ENCODE measurements at regions of chr2 and their contacts with region 1.

Region 1: DNA sequence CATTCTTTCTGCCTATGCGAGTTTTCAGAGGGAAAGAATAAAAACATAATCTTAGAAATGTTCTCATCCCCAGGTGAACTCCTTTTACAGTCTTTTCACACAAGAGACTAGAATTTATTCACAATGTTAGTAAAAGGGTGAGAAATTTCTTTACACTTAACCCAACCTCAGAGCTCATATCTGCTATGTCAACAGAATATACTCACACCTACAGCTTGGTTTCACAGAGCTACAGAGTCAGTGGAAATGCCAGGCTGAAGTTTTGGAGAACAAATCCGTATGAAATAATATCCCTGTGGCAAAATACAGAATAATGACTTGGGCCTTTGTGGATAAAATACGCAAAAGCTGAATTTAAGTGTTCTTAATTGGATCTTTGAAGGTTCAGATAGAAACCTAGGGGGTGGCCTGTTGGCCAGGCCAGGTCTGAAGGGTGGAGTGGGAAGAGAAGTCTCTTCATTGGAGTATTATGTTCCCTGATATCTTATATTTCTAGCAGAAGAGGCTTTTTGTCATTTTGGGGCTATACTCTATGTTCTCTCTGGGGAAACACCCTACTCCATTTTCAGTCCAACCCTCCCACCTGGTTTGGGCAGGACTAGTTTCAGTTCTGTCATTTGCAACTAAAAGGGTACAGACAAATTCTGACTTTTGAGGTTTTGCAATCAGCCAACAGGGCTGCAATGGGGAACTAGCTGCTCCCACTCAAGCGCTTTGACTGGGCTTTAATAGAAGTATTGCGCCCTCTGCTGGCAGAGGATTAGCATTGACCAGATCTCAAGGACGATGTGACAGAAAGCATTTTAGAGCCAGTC is 25.7 kb downstream of the FBXO48 start:
- DNase-seq: peak; percentile 72
- H3K4me3 ChIP-seq: peak overlapping the region in 1 of 2 experiments; percentile 26; a peak in 1 of 4 replicates
- H3K27ac ChIP-seq: no peak overlapping the region
- H3K4me1 ChIP-seq: peaks cover 0 to 3% of the 10 kb centered on the region in 2 experiments; a peak in 1 of 4 replicates
- H3K27me3 ChIP-seq: no peaks in the 10 kb centered on the region
- CTCF ChIP-seq: peak; percentile 94
- EP300 ChIP-seq: no peak
- RAD21 ChIP-seq: peak; percentile 91

Region 2: GRCh38 chr2:68127358-68128242 is 313.8 kb before region 1 on chr2:
- CTCF ChIA-PET with region 1: interaction called, 49 read pairs
- POLR2A ChIA-PET with region 1: no interaction called
- DNase-seq: no peak
- H3K4me3 ChIP-seq: no peak overlapping the region
- H3K27ac ChIP-seq: no peak overlapping the region
- H3K4me1 ChIP-seq: no peaks in the 10 kb centered on the region; a peak in 1 of 4 replicates
- H3K27me3 ChIP-seq: no peaks in the 10 kb centered on the region
- CTCF ChIP-seq: no peak
- EP300 ChIP-seq: no peak
- RAD21 ChIP-seq: no peak

Region 3: DNA sequence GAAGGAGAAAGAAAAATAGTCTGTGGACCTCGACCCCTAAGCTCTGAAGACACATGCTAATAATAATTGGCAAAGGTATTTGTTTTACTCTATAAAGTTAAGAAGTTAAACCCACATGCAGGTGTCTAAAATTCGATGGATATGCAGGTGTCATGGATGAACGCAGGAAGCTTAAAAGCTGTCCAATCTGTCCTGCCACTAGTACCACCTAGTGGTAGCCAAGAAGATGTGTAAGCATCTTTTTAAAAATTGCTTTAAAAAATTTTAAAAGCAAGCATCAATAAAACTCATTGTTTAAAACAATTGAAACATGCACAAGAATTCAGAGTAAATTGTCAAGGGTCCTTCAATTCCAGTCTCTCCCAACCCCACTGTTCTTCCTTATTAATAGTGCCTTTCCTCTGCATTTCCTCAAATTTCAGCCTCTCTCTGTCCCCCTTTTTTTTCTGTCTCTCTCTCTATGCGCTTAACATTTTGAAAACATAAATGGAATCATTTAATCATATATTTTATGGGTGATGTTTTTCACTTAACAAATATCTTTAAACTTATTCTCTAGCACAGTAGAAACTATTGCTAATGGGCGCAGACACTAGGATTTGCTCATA is 158.5 kb before region 1 on chr2:
- CTCF ChIA-PET with region 1: interaction called, 15 read pairs
- POLR2A ChIA-PET with region 1: no interaction called
- DNase-seq: peak; percentile 69
- H3K4me3 ChIP-seq: no peak overlapping the region
- H3K27ac ChIP-seq: no peak overlapping the region
- H3K4me1 ChIP-seq: peaks cover 0 to 4% of the 10 kb centered on the region in 2 experiments; a peak in 2 of 4 replicates
- H3K27me3 ChIP-seq: no peaks in the 10 kb centered on the region
- CTCF ChIP-seq: peak; percentile 89
- EP300 ChIP-seq: no peak
- RAD21 ChIP-seq: peak; percentile 83

Region 4: DNA sequence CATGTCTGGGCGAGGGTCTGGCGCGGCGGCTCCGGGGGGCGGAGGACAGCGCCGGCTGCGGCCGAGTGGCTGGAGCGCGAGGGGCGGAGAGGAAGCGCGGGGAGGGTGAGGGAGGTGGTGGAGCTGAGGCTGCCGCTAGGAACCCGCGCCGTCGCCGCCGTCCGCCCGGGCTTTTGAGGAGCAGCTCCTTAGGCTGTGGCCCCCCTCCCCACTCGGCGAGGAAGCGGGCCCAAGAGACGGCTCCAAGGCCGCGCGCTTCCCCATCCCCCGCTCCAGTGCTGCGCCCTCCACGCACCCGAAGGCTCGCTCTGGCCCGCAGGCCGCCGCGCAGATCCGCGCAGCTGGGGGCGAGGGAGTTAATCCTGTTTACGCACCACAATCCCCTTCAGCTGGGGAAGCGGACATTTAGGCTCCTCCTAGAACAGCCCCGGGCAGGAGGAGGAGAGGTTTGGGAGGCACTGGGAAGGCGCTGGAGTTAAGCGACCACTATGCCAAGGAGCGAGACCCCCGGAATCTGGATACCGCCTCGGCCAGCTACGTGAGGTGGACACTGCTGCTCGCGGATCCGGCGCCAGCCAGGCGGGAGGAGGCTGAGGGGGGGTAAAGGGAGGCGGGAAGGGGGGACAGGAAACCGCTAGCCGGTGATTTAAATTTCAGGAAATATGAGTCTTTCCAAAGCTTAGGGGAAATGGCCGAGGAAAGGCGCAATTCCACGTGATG is 121.8 kb before region 1 on chr2 and contains the start of gene CNRIP1:
- CTCF ChIA-PET with region 1: interaction called, 10 read pairs
- POLR2A ChIA-PET with region 1: interaction called, 4 read pairs
- DNase-seq: peak; percentile 87
- H3K4me3 ChIP-seq: peak within 1 kb of the TSS; percentile 91 to 94
- H3K27ac ChIP-seq: peak within 1 kb of the TSS; percentile 89 to 97
- H3K4me1 ChIP-seq: peaks cover 7 to 11% of the 10 kb centered on the region in 2 experiments; a peak in 3 of 4 replicates
- H3K27me3 ChIP-seq: no peaks in the 10 kb centered on the region
- CTCF ChIP-seq: no peak
- EP300 ChIP-seq: peak in 1 of 2 experiments; percentile 57; a peak in 1 of 4 replicates
- RAD21 ChIP-seq: no peak
- polyA plus RNA-seq, gene CNRIP1: 55.5 and 63.0 TPM in 2 replicates

Region 5: DNA sequence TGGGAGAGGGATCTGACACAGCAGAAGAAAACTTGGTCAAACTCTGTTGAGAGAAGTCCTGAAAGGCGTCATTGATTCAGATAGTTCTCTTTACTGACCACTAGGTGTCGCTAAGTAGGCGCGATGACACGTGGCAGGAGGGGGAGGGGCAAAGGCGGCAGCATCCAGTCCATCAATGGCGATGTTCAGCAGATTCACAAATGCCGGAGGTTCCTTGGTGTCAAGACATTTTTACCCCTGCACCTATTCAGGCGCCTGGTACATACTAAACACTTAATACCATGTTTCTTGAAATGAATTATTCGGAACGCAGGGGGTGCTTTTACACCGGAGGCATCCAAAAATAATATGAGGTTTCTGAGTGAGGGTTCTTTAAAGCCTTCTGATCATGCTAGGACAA is 79.3 kb before region 1 on chr2:
- CTCF ChIA-PET with region 1: interaction called, 20 read pairs
- POLR2A ChIA-PET with region 1: no interaction called
- DNase-seq: peak; percentile 68
- H3K4me3 ChIP-seq: no peak overlapping the region
- H3K27ac ChIP-seq: no peak overlapping the region
- H3K4me1 ChIP-seq: no peaks in the 10 kb centered on the region; a peak in 1 of 4 replicates
- H3K27me3 ChIP-seq: no peaks in the 10 kb centered on the region
- CTCF ChIP-seq: peak; percentile 74
- EP300 ChIP-seq: no peak
- RAD21 ChIP-seq: peak; percentile 75

Region 6: DNA sequence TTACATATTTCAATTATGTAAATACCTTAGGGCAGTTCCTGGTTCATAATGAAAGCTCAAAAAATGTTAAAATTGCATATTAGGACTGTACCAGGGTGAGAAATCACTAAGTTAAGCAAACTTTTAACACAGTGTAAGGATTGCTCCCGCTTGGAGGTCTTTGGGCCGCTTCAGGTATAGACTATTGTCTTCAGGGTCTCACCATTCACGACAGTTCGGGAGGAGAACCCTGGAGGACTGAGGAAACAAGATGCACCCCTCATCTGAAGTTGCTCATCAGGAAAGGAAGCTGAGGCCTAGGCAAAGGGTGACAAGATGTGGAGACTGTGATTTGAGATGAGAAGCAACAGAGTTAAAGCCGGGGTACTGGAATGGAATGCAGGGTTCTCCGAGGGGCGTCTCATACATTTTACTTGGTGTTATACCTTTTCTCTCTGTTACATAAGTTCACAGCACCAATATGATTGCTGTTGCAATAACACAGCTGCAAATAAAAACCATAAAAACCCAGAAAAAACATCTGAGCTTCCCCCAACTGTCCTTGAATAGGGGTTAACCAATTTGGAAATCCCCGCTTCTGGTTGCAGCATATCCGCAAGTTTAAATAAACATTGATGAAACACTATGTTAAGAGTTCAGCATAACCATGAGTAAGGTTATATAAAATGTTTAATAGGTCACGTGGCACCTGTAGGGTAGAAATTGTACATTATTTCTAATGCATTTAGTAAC is 14.4 kb before region 1 on chr2:
- CTCF ChIA-PET with region 1: interaction called, 26 read pairs
- POLR2A ChIA-PET with region 1: no interaction called
- DNase-seq: no peak
- H3K4me3 ChIP-seq: no peak overlapping the region
- H3K27ac ChIP-seq: no peak overlapping the region
- H3K4me1 ChIP-seq: no peaks in the 10 kb centered on the region
- H3K27me3 ChIP-seq: no peaks in the 10 kb centered on the region
- CTCF ChIP-seq: no peak
- EP300 ChIP-seq: no peak
- RAD21 ChIP-seq: no peak

Region 7: DNA sequence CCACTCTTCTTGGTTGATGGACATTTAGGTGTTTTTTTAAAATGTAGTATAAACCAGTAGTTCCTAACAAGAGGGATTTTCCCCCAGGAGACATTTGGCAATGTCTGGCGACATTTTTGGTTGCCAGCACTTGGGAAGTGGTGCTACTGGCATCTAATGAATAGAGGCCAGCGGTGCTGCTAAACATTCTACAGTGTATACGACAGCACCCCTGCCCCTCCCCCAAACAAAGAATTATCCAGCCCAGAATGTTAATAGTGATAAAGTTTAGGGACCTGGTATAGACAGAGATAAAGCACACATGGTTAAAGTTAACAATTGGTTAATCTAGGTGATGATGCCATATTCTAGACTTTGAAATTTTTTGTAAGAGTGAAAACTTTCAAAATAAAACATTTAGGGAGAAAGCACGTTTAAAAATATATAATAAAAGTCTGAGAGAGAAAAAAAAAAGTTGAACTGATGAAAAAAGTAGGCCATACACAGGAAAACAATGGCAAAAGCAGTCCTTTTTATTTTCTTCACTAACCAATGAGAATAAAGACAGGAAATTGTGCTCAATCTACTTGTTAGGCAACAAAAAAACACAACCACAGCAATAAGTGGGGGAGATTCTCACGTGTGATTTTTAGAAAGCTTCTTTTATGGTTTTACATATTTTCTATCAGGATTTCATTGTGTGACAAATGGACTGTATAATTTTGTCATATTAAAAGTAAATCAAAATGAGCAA is 10.9 kb after region 1 on chr2:
- CTCF ChIA-PET with region 1: interaction called, 19 read pairs
- POLR2A ChIA-PET with region 1: no interaction called
- DNase-seq: no peak
- H3K4me3 ChIP-seq: no peak overlapping the region
- H3K27ac ChIP-seq: no peak overlapping the region
- H3K4me1 ChIP-seq: no peaks in the 10 kb centered on the region
- H3K27me3 ChIP-seq: no peaks in the 10 kb centered on the region
- CTCF ChIP-seq: no peak
- EP300 ChIP-seq: no peak
- RAD21 ChIP-seq: no peak

Region 8: DNA sequence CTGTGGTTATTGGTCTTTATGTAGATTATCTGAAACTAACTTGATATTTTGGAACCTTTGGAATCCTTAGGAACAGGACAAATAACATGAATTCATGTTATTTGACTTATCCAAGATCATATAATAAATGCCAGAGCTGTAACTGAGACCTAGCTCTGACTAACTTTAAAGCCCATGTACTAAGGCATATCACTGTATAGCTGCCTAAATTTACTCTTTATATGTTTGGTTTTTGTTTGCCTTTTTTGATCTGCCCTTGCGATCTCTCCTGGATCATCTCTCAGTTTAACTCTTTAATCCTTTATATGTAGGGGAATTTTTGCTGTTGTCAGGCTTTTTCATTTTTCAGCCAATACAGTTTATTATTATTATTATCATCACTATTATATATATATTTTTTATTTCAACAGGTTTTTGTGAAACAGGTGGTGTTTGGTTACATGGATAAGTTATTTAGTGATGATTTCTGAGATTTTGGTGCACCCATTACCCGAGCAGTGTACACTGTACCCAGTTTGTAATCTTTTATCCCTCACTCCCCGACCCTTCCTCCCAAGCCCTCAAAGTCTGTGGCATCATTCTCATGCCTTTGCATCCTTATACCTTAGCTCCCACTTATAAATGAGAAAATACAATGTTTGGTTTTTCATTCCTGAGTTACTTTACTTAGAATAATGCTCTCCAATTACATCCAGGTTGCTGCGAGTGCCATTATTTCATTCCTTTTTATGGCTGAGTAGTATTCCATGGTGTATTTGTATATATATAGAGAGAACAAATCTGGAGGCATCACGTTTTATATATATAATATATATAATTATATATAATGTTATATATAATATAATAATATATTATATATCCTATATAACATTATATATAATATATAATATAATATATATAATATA is 74.9 kb after region 1 on chr2:
- CTCF ChIA-PET with region 1: no interaction called
- POLR2A ChIA-PET with region 1: no interaction called
- DNase-seq: no peak
- H3K4me3 ChIP-seq: no peak overlapping the region
- H3K27ac ChIP-seq: no peak overlapping the region
- H3K4me1 ChIP-seq: no peaks in the 10 kb centered on the region; a peak in 1 of 4 replicates
- H3K27me3 ChIP-seq: no peaks in the 10 kb centered on the region
- CTCF ChIP-seq: no peak
- EP300 ChIP-seq: no peak
- RAD21 ChIP-seq: no peak

Measured in SK-N-SH (cell line).